ENCODE measurements at regions of chr3 and their contacts with region 1.

Region 1: DNA sequence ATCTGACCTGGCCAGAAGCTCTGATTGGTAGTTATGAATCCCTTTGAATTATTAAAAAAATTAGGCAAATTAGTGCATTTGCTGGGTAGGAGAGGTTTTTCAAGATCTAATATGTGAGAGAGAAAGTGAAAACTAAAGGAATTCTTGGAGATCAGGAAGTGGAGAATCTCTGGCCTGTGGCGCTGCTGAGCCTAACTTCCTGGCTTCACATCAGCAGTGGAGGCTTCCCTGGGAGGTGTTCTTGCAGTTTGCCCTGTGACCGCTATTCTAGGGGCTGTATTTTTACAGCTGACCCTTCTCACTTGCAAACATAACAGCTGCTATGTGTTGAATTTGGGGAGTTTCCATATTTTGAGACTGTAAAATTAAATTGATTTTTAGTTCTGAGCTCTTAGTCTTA is 166.4 kb downstream of the ATG7 start:
- DNase-seq: no peak
- ATAC-seq: no peak
- H3K4me3 ChIP-seq: no peak overlapping the region
- H3K27ac ChIP-seq: no peak overlapping the region
- H3K4me1 ChIP-seq: no peaks in the 10 kb centered on the region
- H3K27me3 ChIP-seq: no peaks in the 10 kb centered on the region
- CTCF ChIP-seq: no peak

Region 2: DNA sequence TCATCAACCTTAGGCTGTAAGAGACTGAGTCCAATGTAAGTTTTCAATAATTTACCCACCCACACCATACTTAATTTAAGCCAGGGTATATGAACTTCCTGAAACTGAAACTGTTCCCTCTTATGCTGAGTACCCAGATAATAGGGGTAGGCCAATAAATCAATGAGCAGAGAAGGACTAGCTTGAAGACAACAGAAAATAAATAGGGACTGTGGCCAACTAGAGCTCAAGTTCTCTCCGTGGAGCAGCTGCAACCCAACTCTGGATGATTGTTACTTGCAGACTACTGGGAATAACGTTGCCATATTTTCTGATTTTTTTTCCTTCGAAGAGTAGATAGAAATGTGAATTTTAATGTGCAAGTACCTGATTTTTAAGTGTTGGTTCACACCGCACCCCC is 38.4 kb before region 1 on chr3:
- CTCF ChIA-PET with region 1: no interaction called
- POLR2A ChIA-PET with region 1: interaction called, 12 read pairs
- intact Hi-C with region 1: no loop called
- DNase-seq: no peak
- ATAC-seq: no peak
- H3K4me3 ChIP-seq: no peak overlapping the region
- H3K27ac ChIP-seq: no peak overlapping the region
- H3K4me1 ChIP-seq: no peaks in the 10 kb centered on the region
- H3K27me3 ChIP-seq: no peaks in the 10 kb centered on the region
- CTCF ChIP-seq: no peak

Region 3: GRCh38 chr3:11568503-11569155 is 130.0 kb after region 1 on chr3:
- CTCF ChIA-PET with region 1: no interaction called
- POLR2A ChIA-PET with region 1: no interaction called
- intact Hi-C with region 1: no loop called
- DNase-seq: peak; percentile 93
- ATAC-seq: peak; percentile 86
- H3K4me3 ChIP-seq: peak overlapping the region; percentile 54
- H3K27ac ChIP-seq: peak overlapping the region; percentile 99
- H3K4me1 ChIP-seq: peaks cover 47% of the 10 kb centered on the region
- H3K27me3 ChIP-seq: no peaks in the 10 kb centered on the region
- CTCF ChIP-seq: no peak

Measured in PC-3 (cell line).